Left lung (tissue), 14 donors: ENCODE measurements at regions of chr5 and their contacts with region 1.

Region 1: DNA sequence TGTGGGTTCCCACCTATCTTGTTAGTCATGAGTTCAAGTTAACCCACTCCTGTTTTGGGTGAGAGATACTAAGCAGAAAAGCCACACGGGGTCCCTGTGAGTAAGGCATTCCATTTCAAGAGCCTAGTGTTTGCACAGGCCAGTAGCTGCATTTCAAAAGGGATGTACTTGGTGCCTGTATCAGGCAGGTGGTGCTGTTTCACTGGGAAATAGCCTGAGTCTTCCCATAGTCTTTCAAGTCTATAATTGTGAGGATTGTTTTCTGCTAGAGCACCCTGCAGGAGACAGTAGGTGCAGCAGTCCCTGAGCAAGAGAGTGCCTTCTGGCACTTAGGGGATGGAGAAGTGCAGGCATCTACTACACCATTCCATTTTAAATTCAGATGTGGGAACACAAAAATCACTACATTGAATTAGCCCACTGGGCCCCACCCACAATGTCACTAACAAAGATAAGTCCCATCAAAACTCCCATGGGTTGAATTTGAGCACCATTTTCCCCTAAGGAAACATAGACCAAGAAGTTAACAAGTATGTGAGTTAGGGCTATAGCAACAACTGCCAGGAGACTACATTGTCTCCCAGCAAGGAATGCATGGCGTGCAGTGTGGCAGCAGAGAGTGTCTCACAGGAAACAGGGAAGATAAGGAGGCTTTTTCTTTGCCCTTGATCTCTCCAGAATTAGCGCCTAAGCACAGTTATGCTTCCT is 263.2 kb downstream of the COX7C start:
- DNase-seq: peak in 3 of 4 donors; percentile 34 to 75 (median 37)
- ATAC-seq: peak; percentile 98
- H3K4me3 ChIP-seq: no peak overlapping the region
- H3K27ac ChIP-seq: no peak overlapping the region
- H3K4me1 ChIP-seq: no peaks in the 10 kb centered on the region
- H3K27me3 ChIP-seq: no peaks in the 10 kb centered on the region
- CTCF ChIP-seq: peak; percentile 65 to 67

Region 2: DNA sequence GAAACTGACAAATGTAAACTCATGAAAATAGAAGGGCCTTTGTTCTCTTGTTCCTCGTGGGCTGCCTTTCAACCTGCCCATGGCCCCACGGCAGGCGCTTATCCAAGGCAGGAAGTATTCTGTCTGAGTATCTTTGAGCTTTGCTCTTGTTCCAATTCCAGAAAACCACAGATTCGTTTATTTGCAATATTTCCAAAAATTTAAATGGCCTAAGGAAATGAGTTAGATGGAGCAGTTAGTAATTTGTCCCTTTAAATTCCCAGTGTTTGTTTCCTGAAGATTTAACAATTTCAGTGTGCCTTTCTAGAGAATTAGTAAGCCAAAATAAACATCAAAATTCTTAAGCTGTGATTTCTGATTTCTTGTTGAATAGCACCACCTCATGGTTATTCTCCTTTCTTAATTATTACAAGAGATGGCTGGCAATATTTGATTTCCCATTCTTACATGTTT is 87.4 kb after region 1 on chr5:
- intact Hi-C with region 1: loop called in 1 of 2 experiments (anchors 10 kb)
- DNase-seq: peak in 3 of 4 donors; percentile 33 to 57 (median 53)
- ATAC-seq: peak; percentile 63
- H3K4me3 ChIP-seq: no peak overlapping the region
- H3K27ac ChIP-seq: no peak overlapping the region
- H3K4me1 ChIP-seq: peaks cover 0 to 9% of the 10 kb centered on the region in 2 donors
- H3K27me3 ChIP-seq: no peaks in the 10 kb centered on the region
- CTCF ChIP-seq: no peak